Mammary epithelial cell (primary cell): ENCODE measurements at regions of chr4 and their contacts with region 1.

Region 1: DNA sequence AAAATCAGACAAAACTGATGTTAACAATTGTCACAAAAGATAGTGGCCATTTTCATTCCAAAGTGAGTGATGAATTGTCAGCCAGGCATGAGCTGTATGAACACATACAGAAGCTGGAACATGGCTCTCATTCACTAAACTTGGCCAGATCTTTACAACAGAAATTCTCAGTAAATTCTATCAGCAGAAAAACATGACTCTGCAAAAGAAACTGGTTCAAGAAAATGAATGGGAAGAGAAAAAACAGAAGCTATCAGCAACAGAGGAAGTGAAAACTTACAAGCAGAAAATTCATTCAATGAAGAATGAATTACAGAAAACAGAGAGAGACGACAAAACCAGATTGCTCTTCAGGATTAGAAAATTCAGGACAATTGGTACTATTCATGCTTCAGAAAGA is 249.6 kb downstream of the COL25A1 start:
- DNase-seq: no peak
- H3K4me3 ChIP-seq: no peak overlapping the region
- H3K27ac ChIP-seq: no peak overlapping the region
- H3K4me1 ChIP-seq: no peaks in the 10 kb centered on the region
- H3K27me3 ChIP-seq: no peaks in the 10 kb centered on the region
- CTCF ChIP-seq: no peak

Region 2: DNA sequence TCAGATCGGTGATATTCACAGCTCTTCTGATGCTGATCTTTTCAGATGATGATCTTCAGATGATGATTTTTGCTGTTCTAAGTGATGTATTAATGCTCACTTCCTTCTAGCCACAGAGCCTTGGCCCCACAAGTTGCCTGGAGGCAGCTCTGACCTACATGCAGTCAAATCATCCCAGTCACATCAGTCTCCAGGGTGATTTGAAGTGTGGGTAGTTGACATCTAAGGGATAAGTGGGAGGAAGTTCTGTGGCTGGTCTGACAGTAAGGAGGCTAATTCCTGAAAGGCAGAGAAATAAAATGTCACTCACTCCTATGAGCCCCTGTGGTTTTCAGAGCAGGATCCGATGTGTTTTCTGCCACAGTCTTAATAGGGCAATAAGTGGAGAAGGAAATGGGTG is 512.3 kb before region 1 on chr4:
- CTCF ChIA-PET with region 1: no interaction called
- dilution Hi-C with region 1: no loop called
- in situ Hi-C with region 1: no loop called
- intact Hi-C with region 1: no loop called
- DNase-seq: no peak
- H3K4me3 ChIP-seq: no peak overlapping the region
- H3K27ac ChIP-seq: no peak overlapping the region
- H3K4me1 ChIP-seq: no peaks in the 10 kb centered on the region
- H3K27me3 ChIP-seq: no peaks in the 10 kb centered on the region
- CTCF ChIP-seq: no peak

Region 3: GRCh38 chr4:109146499-109146898 is 93.7 kb after region 1 on chr4:
- CTCF ChIA-PET with region 1: interaction called, 13 read pairs
- dilution Hi-C with region 1: no loop called
- in situ Hi-C with region 1: no loop called
- intact Hi-C with region 1: no loop called
- DNase-seq: no peak
- H3K4me3 ChIP-seq: no peak overlapping the region
- H3K27ac ChIP-seq: no peak overlapping the region
- H3K4me1 ChIP-seq: no peaks in the 10 kb centered on the region
- H3K27me3 ChIP-seq: no peaks in the 10 kb centered on the region
- CTCF ChIP-seq: no peak